Activated CD8-positive, alpha-beta T cell treated with anti-CD3 and anti-CD28 coated beads, Interleukin-2, amount 10 ng/mL, durations not matched to agents 7 days and 5 days (primary cell): ENCODE measurements at regions of chr1 and their contacts with region 1.

Region 1: DNA sequence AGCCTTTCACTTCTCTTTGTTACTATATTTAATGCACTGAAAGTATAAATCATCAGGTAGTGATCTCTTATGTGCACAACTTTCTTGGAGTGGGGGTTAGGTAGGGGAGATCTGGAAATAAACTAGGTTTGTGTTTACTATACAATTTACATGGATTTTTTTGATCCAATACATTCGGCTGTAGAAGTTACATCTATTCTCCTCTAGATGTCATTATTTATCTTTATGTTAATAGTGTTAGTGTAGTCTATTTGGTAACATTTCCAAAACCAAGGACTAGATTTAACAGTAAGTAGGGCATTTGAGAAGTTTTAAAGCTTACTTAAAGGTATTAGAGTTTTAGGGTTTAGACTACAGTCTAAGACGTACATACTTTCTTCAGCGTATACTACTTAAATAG is 5.4 kb downstream of the VPS45 start:
- DNase-seq: no peak
- ATAC-seq: peak; percentile 81
- H3K4me3 Mint-ChIP-seq: no peak overlapping the region
- H3K27ac Mint-ChIP-seq: peak overlapping the region; percentile 5
- H3K4me1 Mint-ChIP-seq: peaks cover 52% of the 10 kb centered on the region
- H3K27me3 Mint-ChIP-seq: no peaks in the 10 kb centered on the region

Region 2: DNA sequence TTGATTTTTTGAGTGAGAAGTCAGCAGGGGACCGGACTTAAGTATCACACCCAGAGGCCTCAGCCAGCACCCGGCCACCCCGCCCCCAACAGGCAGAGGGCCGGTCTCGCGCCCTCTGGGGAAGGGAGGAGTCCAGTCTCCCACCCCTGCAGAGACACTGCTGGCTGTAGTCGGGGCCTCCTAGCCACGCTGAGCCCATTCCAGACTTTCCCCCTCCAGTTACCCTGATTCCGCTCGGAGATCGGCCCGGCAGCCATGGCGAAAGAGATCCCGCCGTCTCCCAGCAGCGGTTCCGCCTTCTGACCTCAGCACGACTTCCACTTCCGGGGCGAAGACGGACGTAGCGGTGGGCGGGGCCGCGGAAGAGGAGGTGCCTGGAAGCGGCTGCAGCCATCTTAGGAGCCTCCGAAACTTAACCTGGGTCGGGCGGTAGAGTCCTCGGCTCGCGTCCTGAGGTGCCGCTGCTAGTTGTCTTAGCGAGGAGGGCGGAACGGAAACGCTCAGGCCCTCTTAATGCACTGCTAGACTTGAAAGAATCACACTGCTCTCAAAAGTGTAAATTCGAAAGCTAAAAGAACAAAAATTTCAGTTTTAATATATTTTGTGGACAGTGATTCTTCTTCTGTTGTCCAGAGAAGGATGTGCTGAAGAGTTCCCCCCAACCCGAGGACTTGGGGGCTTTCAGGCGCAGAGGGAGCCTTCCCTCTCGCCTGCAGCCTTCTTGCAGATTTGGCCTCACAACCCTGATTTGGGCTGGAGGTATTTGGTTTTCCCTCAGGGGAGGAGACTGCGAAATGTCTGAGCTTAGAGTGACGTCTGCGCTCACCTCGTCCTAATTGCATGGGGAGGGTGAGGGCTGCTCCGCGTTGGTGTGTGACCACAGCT is 145.2 kb before region 1 on chr1 and contains the start of gene SF3B4:
- CTCF ChIA-PET with region 1: no interaction called
- POLR2A ChIA-PET with region 1: no interaction called
- DNase-seq: peak; percentile 98
- ATAC-seq: peak; percentile 97
- H3K4me3 Mint-ChIP-seq: peak within 1 kb of the TSS; percentile 96
- H3K27ac Mint-ChIP-seq: peak within 1 kb of the TSS; percentile 93
- H3K4me1 Mint-ChIP-seq: peaks cover 57% of the 10 kb centered on the region
- H3K27me3 Mint-ChIP-seq: no peaks in the 10 kb centered on the region
- total RNA-seq, gene SF3B4: 102 to 106 TPM

Region 3: GRCh38 chr1:150109586-150109985 is 36.6 kb after region 1 on chr1:
- CTCF ChIA-PET with region 1: interaction called, 13 read pairs
- POLR2A ChIA-PET with region 1: no interaction called
- DNase-seq: peak; percentile 44
- ATAC-seq: peak; percentile 82
- H3K4me3 Mint-ChIP-seq: peak overlapping the region; percentile 72
- H3K27ac Mint-ChIP-seq: peak overlapping the region; percentile 91
- H3K4me1 Mint-ChIP-seq: peaks cover 76% of the 10 kb centered on the region
- H3K27me3 Mint-ChIP-seq: no peaks in the 10 kb centered on the region

Region 4: DNA sequence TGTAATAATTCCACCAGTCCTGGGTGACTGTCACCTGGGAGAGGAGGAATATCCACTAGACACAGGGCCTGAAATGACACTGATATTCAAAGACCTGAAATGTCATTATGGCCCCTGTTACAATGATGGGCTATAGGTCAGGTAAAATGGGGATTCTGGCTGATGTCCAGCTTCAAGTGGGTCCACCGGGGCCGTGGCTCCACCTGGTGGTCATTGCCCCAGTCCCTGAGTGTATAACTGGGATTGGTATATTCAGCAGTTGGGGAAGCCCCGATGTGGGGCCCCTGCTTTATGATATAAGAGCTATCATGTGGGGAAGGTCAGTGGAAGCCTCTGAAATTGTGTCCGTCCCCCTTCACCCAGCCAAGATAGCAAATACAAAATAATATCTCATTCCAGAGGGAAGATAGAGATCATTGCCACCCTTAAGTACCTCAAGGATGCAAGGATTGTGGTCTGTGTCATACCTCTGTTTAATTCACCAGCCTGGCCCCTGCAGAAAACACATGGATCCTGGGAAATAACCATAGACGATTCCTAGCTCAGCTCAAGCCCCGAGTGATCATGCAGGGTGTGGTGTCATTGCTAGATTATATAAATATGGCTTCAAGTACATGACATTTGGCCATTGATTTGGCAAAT is 96.1 kb after region 1 on chr1:
- CTCF ChIA-PET with region 1: interaction called, 240 read pairs
- POLR2A ChIA-PET with region 1: interaction called, 5 read pairs
- DNase-seq: peak; percentile 74
- ATAC-seq: peak; percentile 75
- H3K4me3 Mint-ChIP-seq: no peak overlapping the region
- H3K27ac Mint-ChIP-seq: no peak overlapping the region
- H3K4me1 Mint-ChIP-seq: peaks cover 23% of the 10 kb centered on the region
- H3K27me3 Mint-ChIP-seq: peaks cover 2% of the 10 kb centered on the region